ENCODE measurements at regions of chr5 and their contacts with region 1.

Region 1: GRCh38 chr5:141320225-141321169 is at the start of gene TAF7:
- DNase-seq: peak; percentile 81 to 91
- H3K4me3 ChIP-seq: peak within 1 kb of the TSS; percentile 69 to 71
- H3K27ac ChIP-seq: peak within 1 kb of the TSS; percentile 85 to 89
- H3K4me1 ChIP-seq: peaks cover 0 to 12% (median 3%) of the 10 kb centered on the region in 4 donors
- H3K27me3 ChIP-seq: no peaks in the 10 kb centered on the region
- CTCF ChIP-seq: peak; percentile 69 to 78

Region 2: DNA sequence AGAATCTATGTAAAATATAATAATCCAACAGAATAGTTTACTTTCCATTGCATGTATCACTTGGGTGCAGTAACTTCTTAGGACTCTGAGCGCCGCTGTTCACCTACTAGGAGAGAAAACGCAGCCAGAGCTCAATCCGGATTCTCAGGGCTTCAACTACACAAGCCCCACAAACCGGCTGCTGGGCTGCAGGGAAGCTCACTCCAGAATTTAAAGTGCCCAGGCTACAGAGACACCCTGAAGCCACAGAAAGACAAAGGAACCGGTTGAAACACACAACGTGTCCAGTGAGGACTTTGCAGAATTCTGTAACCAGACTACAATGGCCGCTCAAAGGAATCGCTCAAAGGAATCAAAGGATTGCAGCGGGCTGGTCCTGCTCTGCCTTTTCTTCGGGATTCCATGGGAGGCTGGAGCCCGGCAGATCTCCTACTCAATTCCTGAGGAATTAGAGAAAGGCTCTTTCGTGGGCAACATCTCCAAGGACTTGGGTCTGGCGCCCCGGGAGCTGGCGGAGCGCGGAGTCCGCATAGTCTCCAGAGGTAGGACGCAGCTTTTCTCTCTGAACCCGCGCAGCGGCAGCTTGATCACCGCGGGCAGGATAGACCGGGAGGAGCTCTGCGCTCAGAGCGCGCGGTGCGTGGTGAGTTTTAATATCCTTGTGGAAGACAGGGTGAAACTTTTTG is 92.5 kb after region 1 on chr5 and contains the start of gene PCDHGA10:
- intact Hi-C with region 1: loop called (anchors 10 kb)
- DNase-seq: peak; percentile 41 to 56
- H3K4me3 ChIP-seq: peak within 1 kb of the TSS; percentile 22 to 26
- H3K27ac ChIP-seq: no peak within 1 kb of the TSS
- H3K4me1 ChIP-seq: no peaks in the 10 kb centered on the region
- H3K27me3 ChIP-seq: no peaks in the 10 kb centered on the region
- CTCF ChIP-seq: peak; percentile 16 to 20

Region 3: DNA sequence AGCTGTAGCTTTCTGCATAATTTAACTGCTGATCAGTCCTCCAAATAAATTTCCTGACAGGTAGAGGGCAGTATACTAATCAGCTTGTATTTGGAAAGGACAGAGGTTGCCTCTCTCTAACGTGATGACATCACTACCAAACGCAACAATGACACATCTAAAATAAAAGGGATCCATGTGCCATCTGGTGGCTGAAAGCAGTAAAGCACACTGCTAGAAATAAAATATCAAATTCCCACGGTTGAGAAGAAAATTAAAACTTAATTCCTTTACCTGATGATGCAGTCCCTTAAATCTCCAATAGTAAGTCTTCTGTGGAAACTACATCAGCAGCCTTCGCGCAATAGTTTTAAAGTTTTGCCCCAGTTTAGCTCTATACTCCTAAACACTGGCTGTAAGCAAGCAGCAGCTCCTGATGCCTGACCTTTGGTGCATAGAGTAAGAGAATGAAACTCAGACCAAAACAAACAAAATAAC is 243.8 kb after region 1 on chr5:
- intact Hi-C with region 1: loop called (anchors 5 kb)
- DNase-seq: peak in 1 of 2 donors; percentile 71
- H3K4me3 ChIP-seq: no peak overlapping the region
- H3K27ac ChIP-seq: peak overlapping the region; percentile 60 to 79
- H3K4me1 ChIP-seq: peaks cover 0 to 29% (median 14%) of the 10 kb centered on the region in 4 donors
- H3K27me3 ChIP-seq: no peaks in the 10 kb centered on the region
- CTCF ChIP-seq: peak; percentile 89 to 99